ENCODE measurements at regions of chr1 and their contacts with region 1.

Region 1: DNA sequence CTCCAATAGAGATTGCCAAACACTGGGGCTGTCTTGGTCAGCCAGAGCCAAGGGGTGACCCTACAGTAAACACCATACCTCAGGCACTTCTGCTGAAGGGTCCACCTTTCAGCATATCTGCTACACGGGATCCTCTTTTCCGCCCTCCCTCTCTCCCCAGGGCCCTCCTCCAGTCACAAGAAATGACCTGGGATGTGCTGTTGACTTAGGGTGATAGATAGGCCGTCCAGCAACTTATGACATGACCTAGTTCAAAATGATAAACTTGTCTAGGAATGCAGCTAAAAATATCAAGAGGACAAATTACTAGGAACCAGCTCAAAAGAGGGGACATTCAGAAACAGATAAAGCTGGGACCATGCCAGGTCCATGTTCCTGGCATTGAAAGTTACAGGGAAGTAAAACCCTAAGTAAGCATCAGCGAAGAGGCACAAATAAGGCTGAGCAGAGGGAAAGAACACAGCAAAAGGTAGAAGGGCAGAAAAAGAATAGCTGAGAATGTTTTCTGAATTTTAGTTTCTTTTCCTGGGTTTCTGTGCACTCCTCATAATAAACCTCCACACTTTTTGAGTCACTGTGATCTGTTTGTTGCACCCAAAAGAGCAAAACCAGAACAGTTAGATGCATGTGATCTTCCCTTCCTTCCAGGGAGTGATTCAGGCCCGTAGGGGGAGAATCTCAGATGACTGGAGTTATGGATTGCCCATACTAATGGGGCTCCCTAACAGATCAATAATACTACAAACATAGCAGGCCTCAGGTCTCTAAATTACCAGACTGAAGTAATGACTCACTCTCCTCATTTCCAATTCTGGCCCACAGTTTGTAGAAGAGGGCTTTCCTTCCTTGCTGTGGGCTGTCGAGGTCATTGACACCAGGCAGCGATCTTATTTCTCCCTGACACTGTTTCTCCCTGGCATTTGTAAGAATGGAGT is 48.9 kb upstream of the F3 start:
- DNase-seq: no peak
- ATAC-seq: peak in 7 of 8 donors; percentile 28 to 70 (median 52)
- H3K4me3 ChIP-seq: no peak overlapping the region
- H3K27ac ChIP-seq: peak overlapping the region in 4 of 10 donors; percentile 3 to 41 (median 17)
- H3K4me1 ChIP-seq: peaks cover 0 to 24% (median 9%) of the 10 kb centered on the region in 9 donors
- H3K27me3 ChIP-seq: no peaks in the 10 kb centered on the region
- CTCF ChIP-seq: no peak

Region 2: DNA sequence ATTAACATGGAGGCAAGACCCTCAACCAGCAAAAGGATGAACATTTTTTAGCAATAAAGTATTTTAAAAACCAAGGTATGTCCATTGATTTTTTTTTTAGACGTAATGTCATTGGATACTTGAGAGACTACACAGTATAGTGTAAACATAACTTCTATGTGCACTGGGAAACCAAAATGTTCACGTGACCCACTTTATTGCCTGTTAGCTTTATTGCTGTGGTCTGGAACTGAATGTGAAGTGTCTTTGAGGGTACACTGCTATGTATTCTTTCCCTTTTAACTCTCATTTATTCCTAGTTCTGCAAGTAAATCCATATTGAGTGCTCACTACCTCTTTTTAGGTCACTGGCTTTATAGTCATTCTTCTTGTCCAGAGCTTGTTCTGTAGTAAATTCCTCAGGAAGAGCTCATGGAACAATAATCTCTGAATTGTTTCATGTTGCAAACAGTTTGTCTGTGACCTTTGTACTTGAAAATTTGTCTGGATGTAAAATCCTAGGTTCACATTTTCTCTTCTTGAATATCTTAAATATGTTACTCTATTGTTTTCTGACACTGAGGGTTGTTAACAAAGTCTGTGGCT is 151.7 kb before region 1 on chr1:
- intact Hi-C with region 1: no loop called
- DNase-seq: no peak
- ATAC-seq: no peak
- H3K4me3 ChIP-seq: no peak overlapping the region
- H3K27ac ChIP-seq: no peak overlapping the region
- H3K4me1 ChIP-seq: peaks cover 0 to 5% (median 0%) of the 10 kb centered on the region in 9 donors
- H3K27me3 ChIP-seq: no peaks in the 10 kb centered on the region
- CTCF ChIP-seq: no peak

Region 3: DNA sequence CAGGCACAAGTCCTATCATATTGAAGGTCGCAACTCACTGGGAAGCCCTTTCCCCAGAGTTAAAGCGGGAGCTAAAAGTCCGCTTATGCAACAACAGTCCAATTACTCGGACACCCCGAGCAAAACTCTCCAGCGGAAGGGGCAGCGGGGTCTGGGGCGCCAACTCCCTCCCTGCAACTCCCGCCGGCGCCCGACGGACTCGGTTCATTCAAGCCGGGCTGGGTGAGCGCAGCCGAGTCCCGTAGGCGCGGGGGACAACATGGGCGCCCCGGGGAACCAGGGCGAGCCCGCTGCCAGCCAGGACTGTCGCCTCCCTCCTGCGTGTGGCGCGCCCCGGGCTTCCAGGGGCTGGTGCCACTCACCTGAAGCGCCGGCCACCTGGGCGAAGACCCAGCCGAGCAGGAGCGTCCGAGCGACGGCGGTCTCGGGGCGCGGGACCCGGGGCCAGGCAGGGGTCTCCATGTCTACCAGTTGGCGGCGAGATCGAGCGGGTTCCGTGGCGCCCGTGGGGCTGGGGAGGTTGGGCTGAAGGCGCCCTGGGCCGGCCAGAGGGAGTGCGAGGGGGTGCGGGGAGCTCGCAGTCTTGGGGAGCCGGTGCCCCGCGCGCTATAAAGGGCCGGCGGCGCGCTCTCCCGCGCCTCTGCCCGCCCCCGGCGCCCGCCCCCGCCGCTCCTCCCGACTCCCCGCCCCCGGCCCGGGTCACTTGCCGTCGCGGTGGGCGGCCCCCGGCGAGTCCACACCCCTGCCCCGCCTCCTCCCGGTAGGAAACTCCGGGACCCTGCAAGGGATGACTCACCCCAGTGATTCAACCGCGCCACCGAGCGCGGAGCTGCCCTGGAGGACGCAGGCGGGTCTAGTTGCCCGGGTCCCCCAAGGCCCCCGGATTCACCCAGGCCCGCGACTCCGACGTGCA is 49.0 kb before region 1 on chr1 and contains the start of gene F3:
- intact Hi-C with region 1: loop called in 6 of 10 experiments (anchors 5 kb)
- DNase-seq: peak; percentile 89
- ATAC-seq: peak; percentile 92 to 96 (median 94)
- H3K4me3 ChIP-seq: peak within 1 kb of the TSS; percentile 45 to 80 (median 72)
- H3K27ac ChIP-seq: peak within 1 kb of the TSS; percentile 87 to 95 (median 90)
- H3K4me1 ChIP-seq: peaks cover 0 to 50% (median 32%) of the 10 kb centered on the region in 9 donors
- H3K27me3 ChIP-seq: peaks cover 0 to 12% (median 0%) of the 10 kb centered on the region in 7 donors
- CTCF ChIP-seq: peak in 2 of 9 donors; percentile 29 to 34
- total RNA-seq, gene F3: 20.4 to 99.0 (median 48.5) TPM

Region 4: GRCh38 chr1:95575291-95575690 is 984.8 kb after region 1 on chr1:
- intact Hi-C with region 1: no loop called
- DNase-seq: no peak
- ATAC-seq: no peak
- H3K4me3 ChIP-seq: no peak overlapping the region
- H3K27ac ChIP-seq: no peak overlapping the region
- H3K4me1 ChIP-seq: no peaks in the 10 kb centered on the region
- H3K27me3 ChIP-seq: peaks cover 0 to 6% (median 0%) of the 10 kb centered on the region in 7 donors
- CTCF ChIP-seq: no peak